ENCODE measurements at regions of chrX and their contacts with region 1.

Region 1: GRCh38 chrX:79138658-79139241 is 5.7 kb upstream of the GPR174 start:
- DNase-seq: no peak
- ATAC-seq: peak; percentile 67
- H3K4me3 ChIP-seq: no peak overlapping the region
- H3K4me3 Mint-ChIP-seq: peak overlapping the region; percentile 3 to 61 (median 32)
- H3K27ac ChIP-seq: peak overlapping the region; percentile 45
- H3K27ac Mint-ChIP-seq: peak overlapping the region; percentile 6 to 88 (median 53)
- H3K4me1 ChIP-seq: peaks cover 19 to 35% of the 10 kb centered on the region in 2 donors
- H3K4me1 Mint-ChIP-seq: peaks cover 12 to 59% (median 46%) of the 10 kb centered on the region in 7 donors
- H3K27me3 ChIP-seq: no peaks in the 10 kb centered on the region
- H3K27me3 Mint-ChIP-seq: no peaks in the 10 kb centered on the region

Region 2: GRCh38 chrX:79117078-79117477 is 21.7 kb before region 1 on chrX:
- CTCF ChIA-PET with region 1: interaction called, 3 read pairs
- POLR2A ChIA-PET with region 1: interaction called, 98 read pairs
- intact Hi-C with region 1: loop called in 1 of 2 experiments (anchors 2 kb)
- DNase-seq: no peak
- ATAC-seq: no peak
- H3K4me3 ChIP-seq: no peak overlapping the region
- H3K4me3 Mint-ChIP-seq: peak overlapping the region in 7 of 10 donors; percentile 20 to 59 (median 39)
- H3K27ac ChIP-seq: no peak overlapping the region
- H3K27ac Mint-ChIP-seq: peak overlapping the region in 4 of 9 donors; percentile 46 to 86 (median 78)
- H3K4me1 ChIP-seq: peaks cover 7 to 17% of the 10 kb centered on the region in 2 donors
- H3K4me1 Mint-ChIP-seq: peaks cover 7 to 59% (median 35%) of the 10 kb centered on the region in 7 donors
- H3K27me3 ChIP-seq: no peaks in the 10 kb centered on the region
- H3K27me3 Mint-ChIP-seq: no peaks in the 10 kb centered on the region

Measured in naive thymus-derived CD4-positive, alpha-beta T cell (primary cell).